Endothelial cell of umbilical vein (primary cell): ENCODE measurements at regions of chr5 and their contacts with region 1.

Region 1: GRCh38 chr5:72451741-72452505 is 55.3 kb downstream of the ZNF366 start:
- DNase-seq: peak; percentile 98
- H3K4me3 ChIP-seq: no peak overlapping the region
- H3K27ac ChIP-seq: peak overlapping the region; percentile 100
- H3K4me1 ChIP-seq: peaks cover 49% of the 10 kb centered on the region
- H3K27me3 ChIP-seq: no peaks in the 10 kb centered on the region
- CTCF ChIP-seq: no peak
- POLR2A ChIP-seq: peak; percentile 48

Region 2: GRCh38 chr5:72378636-72379290 is 73.2 kb before region 1 on chr5:
- CTCF ChIA-PET with region 1: interaction called, 4 read pairs
- POLR2A ChIA-PET with region 1: interaction called, 3 read pairs
- dilution Hi-C with region 1: no loop called
- intact Hi-C with region 1: loop called (anchors 2 kb)
- DNase-seq: peak; percentile 96
- H3K4me3 ChIP-seq: no peak overlapping the region
- H3K27ac ChIP-seq: peak overlapping the region; percentile 30
- H3K4me1 ChIP-seq: peaks cover 15% of the 10 kb centered on the region
- H3K27me3 ChIP-seq: no peaks in the 10 kb centered on the region
- CTCF ChIP-seq: no peak
- POLR2A ChIP-seq: no peak

Region 3: DNA sequence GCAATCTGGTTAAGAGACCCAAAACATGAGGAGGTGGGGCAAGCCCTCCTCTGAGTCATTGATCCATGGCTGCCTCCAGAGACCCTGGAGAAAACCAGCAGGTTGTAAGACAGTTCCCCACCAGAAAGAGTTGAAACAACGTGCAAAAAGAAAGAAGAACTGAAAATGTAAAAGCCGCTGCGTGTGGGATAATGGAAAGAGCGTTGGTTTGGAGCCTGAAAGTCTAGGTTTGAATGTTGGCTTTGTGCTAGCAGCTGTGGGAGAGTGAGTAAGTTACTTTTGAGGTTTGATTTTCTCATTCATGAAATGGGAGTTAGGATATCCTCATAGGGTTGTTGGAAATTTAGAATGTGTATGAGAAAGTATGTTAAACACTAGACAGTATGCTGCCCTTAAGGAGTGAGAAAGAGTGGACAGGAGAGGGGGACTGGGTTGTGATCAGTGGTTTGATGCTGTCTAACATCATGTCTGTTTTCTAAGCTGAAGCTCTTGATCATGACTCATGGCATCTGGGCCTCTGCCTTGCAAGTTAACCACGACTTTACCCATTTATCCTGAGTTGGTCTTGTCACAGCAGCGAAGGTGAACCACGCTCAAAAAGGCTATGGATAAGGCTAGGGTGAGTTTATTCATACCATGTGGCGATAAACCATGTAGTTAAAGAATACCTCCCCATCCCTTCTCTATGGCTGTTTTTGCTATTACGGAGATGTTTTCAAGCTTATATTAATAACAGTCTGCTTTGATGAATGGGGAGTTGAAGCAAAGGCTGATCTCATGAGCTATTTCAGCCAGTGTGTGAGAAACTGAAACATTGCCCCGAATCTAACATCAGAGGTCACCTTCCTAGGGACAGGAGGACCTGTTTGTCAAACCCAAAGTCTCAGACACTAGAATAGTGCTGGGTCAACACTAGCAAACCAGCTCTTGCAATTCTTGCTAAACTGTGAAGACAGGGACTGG is 14.0 kb after region 1 on chr5:
- CTCF ChIA-PET with region 1: interaction called, 15 read pairs
- POLR2A ChIA-PET with region 1: interaction called, 4 read pairs
- dilution Hi-C with region 1: no loop called
- intact Hi-C with region 1: loop called (anchors 1 kb)
- DNase-seq: peak; percentile 23
- H3K4me3 ChIP-seq: no peak overlapping the region
- H3K27ac ChIP-seq: no peak overlapping the region
- H3K4me1 ChIP-seq: peaks cover 36% of the 10 kb centered on the region
- H3K27me3 ChIP-seq: no peaks in the 10 kb centered on the region
- CTCF ChIP-seq: no peak
- POLR2A ChIP-seq: no peak

Region 4: DNA sequence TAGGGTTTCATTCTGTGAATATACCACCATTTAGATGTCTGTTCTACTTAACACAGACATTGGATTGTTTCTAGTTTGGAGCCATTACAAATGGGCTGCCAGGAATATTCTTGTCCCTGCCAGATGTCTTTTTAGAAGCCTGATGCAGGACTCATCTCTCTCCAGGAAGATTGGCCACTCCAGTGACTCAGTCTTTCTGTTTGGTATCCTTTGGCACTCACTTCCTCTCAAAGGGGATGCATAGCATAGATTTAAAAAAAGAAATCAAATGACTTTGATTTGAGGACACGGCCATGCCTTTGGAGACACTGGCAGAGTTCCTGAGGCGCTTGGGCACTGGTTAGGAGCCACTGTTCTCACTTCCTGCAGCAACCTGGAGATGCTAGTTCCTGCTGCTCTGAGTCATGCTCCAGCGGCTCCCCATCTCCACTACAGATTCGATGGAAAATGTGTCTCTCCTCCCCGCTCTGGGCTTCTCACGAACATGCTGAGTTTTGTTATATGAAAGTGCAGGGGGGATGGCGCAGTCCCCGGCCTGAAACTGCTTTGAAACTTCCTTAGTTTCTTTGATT is 58.8 kb after region 1 on chr5:
- CTCF ChIA-PET with region 1: interaction called, 5 read pairs
- POLR2A ChIA-PET with region 1: no interaction called
- dilution Hi-C with region 1: no loop called
- intact Hi-C with region 1: loop called (anchors 2 kb)
- DNase-seq: peak; percentile 80
- H3K4me3 ChIP-seq: no peak overlapping the region
- H3K27ac ChIP-seq: peak overlapping the region; percentile 65
- H3K4me1 ChIP-seq: peaks cover 49% of the 10 kb centered on the region
- H3K27me3 ChIP-seq: no peaks in the 10 kb centered on the region
- CTCF ChIP-seq: no peak
- POLR2A ChIP-seq: no peak

Region 5: GRCh38 chr5:72604111-72604797 is 152.3 kb after region 1 on chr5:
- CTCF ChIA-PET with region 1: interaction called, 10 read pairs
- POLR2A ChIA-PET with region 1: interaction called, 6 read pairs
- dilution Hi-C with region 1: no loop called
- intact Hi-C with region 1: loop called (anchors 1 kb)
- DNase-seq: peak; percentile 99
- H3K4me3 ChIP-seq: no peak overlapping the region
- H3K27ac ChIP-seq: peak overlapping the region; percentile 97
- H3K4me1 ChIP-seq: peaks cover 64% of the 10 kb centered on the region
- H3K27me3 ChIP-seq: no peaks in the 10 kb centered on the region
- CTCF ChIP-seq: no peak
- POLR2A ChIP-seq: peak; percentile 25

Region 6: GRCh38 chr5:72842816-72843215 is 390.9 kb after region 1 on chr5:
- CTCF ChIA-PET with region 1: no interaction called
- POLR2A ChIA-PET with region 1: no interaction called
- dilution Hi-C with region 1: no loop called
- intact Hi-C with region 1: loop called (anchors 1 kb)
- DNase-seq: peak; percentile 92
- H3K4me3 ChIP-seq: peak overlapping the region in 1 of 3 experiments; percentile 25
- H3K27ac ChIP-seq: peak overlapping the region; percentile 95
- H3K4me1 ChIP-seq: peaks cover 70% of the 10 kb centered on the region
- H3K27me3 ChIP-seq: no peaks in the 10 kb centered on the region
- CTCF ChIP-seq: peak in 1 of 2 donors; percentile 11
- POLR2A ChIP-seq: no peak